Ascending aorta (tissue), 2 donors: ENCODE measurements at regions of chr4 and their contacts with region 1.

Region 1: DNA sequence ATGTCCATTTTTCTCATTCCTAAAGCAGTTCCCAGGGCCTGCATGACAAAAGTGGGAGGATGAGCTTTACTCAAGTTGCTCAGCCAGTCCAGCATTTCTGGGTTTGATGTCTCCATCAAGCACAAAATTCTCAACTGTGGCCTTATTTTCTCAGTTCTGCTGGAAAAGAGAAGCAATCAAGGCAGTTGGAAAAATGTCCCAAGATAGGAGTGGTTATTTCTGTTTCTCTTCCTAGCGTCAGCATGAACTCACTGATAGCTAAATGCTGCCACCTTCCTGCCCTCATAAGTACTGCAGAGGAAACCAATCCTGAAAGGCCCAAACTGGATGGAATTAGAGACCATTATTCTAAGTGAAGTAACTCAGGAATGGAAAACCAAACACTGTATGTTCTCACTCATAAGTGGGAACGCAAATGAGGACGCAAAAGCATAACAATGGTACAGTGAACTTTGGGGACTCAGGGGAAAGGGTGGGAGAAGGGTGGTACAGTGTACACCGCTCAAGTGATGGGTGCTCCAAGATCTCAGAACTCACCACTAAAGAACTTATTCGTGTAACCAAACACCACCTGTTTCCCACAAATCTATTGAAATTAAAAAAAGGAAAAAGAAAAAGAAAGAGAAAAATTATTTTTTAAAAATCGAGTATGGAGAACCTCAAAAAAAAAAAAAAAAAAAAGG is 29.6 kb downstream of the ADH7 start:
- DNase-seq: peak in 1 of 2 donors; percentile 85
- H3K4me3 ChIP-seq: no peak overlapping the region
- H3K27ac ChIP-seq: peak overlapping the region; percentile 91 to 94
- H3K4me1 ChIP-seq: peaks cover 11 to 44% of the 10 kb centered on the region in 2 donors
- H3K27me3 ChIP-seq: no peaks in the 10 kb centered on the region
- CTCF ChIP-seq: peak; percentile 90 to 95 (median 92)

Region 2: DNA sequence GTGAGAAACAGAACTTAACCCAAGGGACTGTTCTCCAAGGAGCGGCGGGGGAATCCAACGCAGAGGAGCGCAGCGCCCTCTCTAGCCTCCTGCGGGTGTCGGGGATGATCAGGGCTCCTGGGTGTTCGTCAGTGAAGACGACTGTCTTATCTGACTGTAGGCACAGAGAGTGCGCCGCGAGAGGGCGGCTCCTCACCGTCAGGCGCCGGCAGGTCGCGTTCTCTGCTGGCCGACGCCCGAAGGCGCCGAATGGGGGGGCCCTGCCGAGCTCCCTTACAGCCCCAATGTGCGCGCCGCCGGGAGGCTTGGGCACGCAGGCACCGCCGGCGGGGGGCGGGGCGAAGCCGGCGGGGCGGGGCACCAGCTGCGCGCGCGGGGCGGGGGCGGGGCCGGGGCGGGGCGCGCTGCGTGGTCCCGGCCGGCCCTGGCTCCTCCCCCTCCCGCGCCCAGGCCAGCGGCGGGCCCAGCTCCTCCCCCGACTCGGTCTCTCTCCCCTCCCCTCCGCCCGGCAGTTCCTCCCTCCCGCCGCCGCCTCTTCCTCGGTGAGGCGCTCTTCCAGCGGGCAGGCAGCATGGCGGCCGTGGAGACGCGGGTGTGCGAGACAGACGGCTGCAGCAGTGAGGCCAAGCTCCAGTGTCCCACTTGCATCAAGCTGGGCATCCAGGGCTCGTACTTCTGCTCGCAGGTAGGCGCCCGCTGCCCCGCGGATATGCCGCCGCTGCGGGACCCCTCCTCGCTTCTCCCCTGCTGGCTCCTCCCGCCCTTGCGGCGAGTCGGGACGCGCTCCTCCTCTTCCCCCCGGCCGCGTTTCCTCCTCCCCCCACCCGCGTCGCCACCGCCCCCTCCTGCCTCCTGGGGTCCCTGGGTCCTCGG is 410.2 kb before region 1 on chr4 and contains the start of gene METAP1:
- intact Hi-C with region 1: loop called (anchors 5 kb)
- DNase-seq: peak; percentile 82 to 96
- H3K4me3 ChIP-seq: peak within 1 kb of the TSS; percentile 91
- H3K27ac ChIP-seq: peak within 1 kb of the TSS; percentile 81 to 91
- H3K4me1 ChIP-seq: peaks cover 0 to 7% of the 10 kb centered on the region in 2 donors
- H3K27me3 ChIP-seq: no peaks in the 10 kb centered on the region
- CTCF ChIP-seq: peak; percentile 39 to 64 (median 58)
- total RNA-seq, gene METAP1: 53.2 TPM

Region 3: GRCh38 chr4:99117876-99118693 is 287.5 kb before region 1 on chr4:
- intact Hi-C with region 1: loop called (anchors 1 kb)
- DNase-seq: no peak
- H3K4me3 ChIP-seq: no peak overlapping the region
- H3K27ac ChIP-seq: no peak overlapping the region
- H3K4me1 ChIP-seq: peaks cover 0 to 3% of the 10 kb centered on the region in 2 donors
- H3K27me3 ChIP-seq: no peaks in the 10 kb centered on the region
- CTCF ChIP-seq: peak in 1 of 3 experiments; percentile 41

Region 4: GRCh38 chr4:99248714-99249113 is 156.9 kb before region 1 on chr4:
- intact Hi-C with region 1: loop called (anchors 5 kb)
- DNase-seq: no peak
- H3K4me3 ChIP-seq: no peak overlapping the region
- H3K27ac ChIP-seq: peak overlapping the region; percentile 79 to 82
- H3K4me1 ChIP-seq: peaks cover 0 to 8% of the 10 kb centered on the region in 2 donors
- H3K27me3 ChIP-seq: no peaks in the 10 kb centered on the region
- CTCF ChIP-seq: no peak

Region 5: DNA sequence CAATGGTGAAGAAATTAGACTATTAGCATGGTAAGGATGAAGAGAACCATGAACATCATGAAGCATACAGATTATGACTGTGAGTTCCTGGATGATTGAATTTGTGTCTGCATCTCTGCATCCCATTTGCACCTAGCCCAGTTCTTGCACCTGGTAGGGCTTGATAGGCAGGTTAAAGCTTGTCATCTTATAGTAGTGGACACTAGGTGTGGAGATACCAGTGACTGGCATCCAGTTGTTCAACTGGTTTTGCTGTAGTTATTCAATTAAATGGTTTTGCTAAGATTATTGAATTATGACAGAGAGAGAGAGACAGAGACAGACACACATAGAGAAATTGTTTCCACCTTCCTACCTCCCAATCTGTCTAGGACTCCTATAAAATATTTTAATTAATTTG is 24.5 kb after region 1 on chr4:
- intact Hi-C with region 1: no loop called
- DNase-seq: no peak
- H3K4me3 ChIP-seq: no peak overlapping the region
- H3K27ac ChIP-seq: no peak overlapping the region
- H3K4me1 ChIP-seq: no peaks in the 10 kb centered on the region
- H3K27me3 ChIP-seq: no peaks in the 10 kb centered on the region
- CTCF ChIP-seq: no peak

Region 6: GRCh38 chr4:99462875-99463464 is 57.4 kb after region 1 on chr4:
- intact Hi-C with region 1: loop called (anchors 2 kb)
- DNase-seq: peak in 1 of 2 donors; percentile 74
- H3K4me3 ChIP-seq: no peak overlapping the region
- H3K27ac ChIP-seq: no peak overlapping the region
- H3K4me1 ChIP-seq: no peaks in the 10 kb centered on the region
- H3K27me3 ChIP-seq: no peaks in the 10 kb centered on the region
- CTCF ChIP-seq: peak; percentile 73 to 85 (median 80)